Naive thymus-derived CD4-positive, alpha-beta T cell (primary cell): ENCODE measurements at regions of chr5 and their contacts with region 1.

Region 1: DNA sequence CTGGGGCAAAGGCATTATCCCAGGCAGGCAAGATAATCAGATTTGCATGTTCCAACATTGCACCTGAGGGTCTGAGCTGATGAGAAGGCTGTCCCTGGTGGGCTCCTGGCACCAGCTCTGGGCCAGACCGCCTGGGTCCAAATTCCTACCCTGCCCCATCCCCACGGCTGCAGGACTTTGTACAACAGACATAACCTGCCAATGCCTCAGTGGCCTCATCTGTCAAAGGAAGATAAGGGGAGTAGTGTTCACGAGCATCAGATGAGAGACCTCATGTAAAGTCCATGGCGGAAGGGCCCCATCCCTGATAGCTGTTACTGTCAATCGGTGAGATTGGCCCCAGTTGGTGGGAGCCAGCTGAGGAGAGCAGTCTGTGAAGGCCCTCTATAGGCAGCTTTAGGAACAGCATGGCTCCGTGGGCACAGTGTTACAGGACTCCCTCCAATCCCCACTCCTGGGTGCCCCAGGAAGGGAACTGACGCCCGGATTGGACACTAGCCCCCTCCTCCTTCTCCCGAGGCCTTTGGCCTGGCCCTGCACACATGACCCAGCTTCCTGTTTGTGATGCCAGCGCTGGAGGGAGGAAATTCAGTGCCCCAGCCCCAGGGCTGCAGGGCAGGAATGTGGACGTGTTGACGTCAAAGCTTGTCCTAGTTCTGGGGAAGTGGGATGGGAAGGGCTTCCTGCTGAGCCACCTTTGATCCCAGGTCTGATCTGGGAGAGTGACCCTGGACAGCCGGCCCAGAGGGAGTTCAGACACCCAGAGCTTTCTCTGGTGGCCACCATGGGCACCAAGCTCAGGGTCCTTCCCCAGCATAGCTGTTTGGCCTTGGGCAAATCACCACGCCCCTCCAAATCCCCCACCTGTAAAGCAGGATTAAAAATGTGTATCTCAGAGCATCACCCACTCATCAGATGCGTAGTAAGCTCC is 56.2 kb downstream of the DUSP1 start:
- DNase-seq: peak; percentile 38 to 65 (median 57)
- ATAC-seq: peak; percentile 85
- H3K4me3 ChIP-seq: no peak overlapping the region
- H3K4me3 Mint-ChIP-seq: no peak overlapping the region
- H3K27ac ChIP-seq: no peak overlapping the region
- H3K27ac Mint-ChIP-seq: peak overlapping the region in 4 of 9 donors; percentile 17 to 72 (median 38)
- H3K4me1 ChIP-seq: peaks cover 0 to 7% of the 10 kb centered on the region in 2 donors
- H3K4me1 Mint-ChIP-seq: peaks cover 0 to 8% (median 5%) of the 10 kb centered on the region in 7 donors
- H3K27me3 ChIP-seq: no peaks in the 10 kb centered on the region
- H3K27me3 Mint-ChIP-seq: peaks cover 0 to 18% (median 11%) of the 10 kb centered on the region in 5 donors

Region 2: GRCh38 chr5:172777881-172778814 is 63.4 kb after region 1 on chr5:
- CTCF ChIA-PET with region 1: interaction called, 33 read pairs
- POLR2A ChIA-PET with region 1: interaction called, 7 read pairs
- intact Hi-C with region 1: loop called in 1 of 2 experiments (anchors 1 kb)
- DNase-seq: no peak
- ATAC-seq: peak; percentile 26
- H3K4me3 ChIP-seq: peak overlapping the region; percentile 10
- H3K4me3 Mint-ChIP-seq: peak overlapping the region in 9 of 10 donors; percentile 60 to 81 (median 64)
- H3K27ac ChIP-seq: peak overlapping the region; percentile 89
- H3K27ac Mint-ChIP-seq: peak overlapping the region; percentile 91 to 98 (median 93)
- H3K4me1 ChIP-seq: peaks cover 23 to 27% of the 10 kb centered on the region in 2 donors
- H3K4me1 Mint-ChIP-seq: peaks cover 18 to 46% (median 40%) of the 10 kb centered on the region in 7 donors
- H3K27me3 ChIP-seq: no peaks in the 10 kb centered on the region
- H3K27me3 Mint-ChIP-seq: peaks cover 0 to 3% (median 0%) of the 10 kb centered on the region in 5 donors

Region 3: GRCh38 chr5:172849606-172850453 is 135.1 kb after region 1 on chr5:
- CTCF ChIA-PET with region 1: interaction called, 3 read pairs
- POLR2A ChIA-PET with region 1: no interaction called
- intact Hi-C with region 1: loop called in 1 of 2 experiments (anchors 5 kb)
- DNase-seq: no peak
- ATAC-seq: peak; percentile 38
- H3K4me3 ChIP-seq: no peak overlapping the region
- H3K4me3 Mint-ChIP-seq: peak overlapping the region in 1 of 10 donors; percentile 3
- H3K27ac ChIP-seq: no peak overlapping the region
- H3K27ac Mint-ChIP-seq: peak overlapping the region in 6 of 9 donors; percentile 33 to 71 (median 56)
- H3K4me1 ChIP-seq: peaks cover 11 to 17% of the 10 kb centered on the region in 2 donors
- H3K4me1 Mint-ChIP-seq: peaks cover 22 to 80% (median 71%) of the 10 kb centered on the region in 7 donors
- H3K27me3 ChIP-seq: no peaks in the 10 kb centered on the region
- H3K27me3 Mint-ChIP-seq: no peaks in the 10 kb centered on the region

Region 4: GRCh38 chr5:172932313-172933017 is 217.7 kb after region 1 on chr5:
- CTCF ChIA-PET with region 1: interaction called, 178 read pairs
- POLR2A ChIA-PET with region 1: interaction called, 11 read pairs
- intact Hi-C with region 1: loop called (anchors 1 kb)
- DNase-seq: peak; percentile 53 to 79 (median 68)
- ATAC-seq: peak; percentile 98
- H3K4me3 ChIP-seq: no peak overlapping the region
- H3K4me3 Mint-ChIP-seq: no peak overlapping the region
- H3K27ac ChIP-seq: no peak overlapping the region
- H3K27ac Mint-ChIP-seq: peak overlapping the region in 8 of 9 donors; percentile 25 to 82 (median 52)
- H3K4me1 ChIP-seq: no peaks in the 10 kb centered on the region
- H3K4me1 Mint-ChIP-seq: peaks cover 0 to 13% (median 6%) of the 10 kb centered on the region in 7 donors
- H3K27me3 ChIP-seq: no peaks in the 10 kb centered on the region
- H3K27me3 Mint-ChIP-seq: no peaks in the 10 kb centered on the region

Region 5: DNA sequence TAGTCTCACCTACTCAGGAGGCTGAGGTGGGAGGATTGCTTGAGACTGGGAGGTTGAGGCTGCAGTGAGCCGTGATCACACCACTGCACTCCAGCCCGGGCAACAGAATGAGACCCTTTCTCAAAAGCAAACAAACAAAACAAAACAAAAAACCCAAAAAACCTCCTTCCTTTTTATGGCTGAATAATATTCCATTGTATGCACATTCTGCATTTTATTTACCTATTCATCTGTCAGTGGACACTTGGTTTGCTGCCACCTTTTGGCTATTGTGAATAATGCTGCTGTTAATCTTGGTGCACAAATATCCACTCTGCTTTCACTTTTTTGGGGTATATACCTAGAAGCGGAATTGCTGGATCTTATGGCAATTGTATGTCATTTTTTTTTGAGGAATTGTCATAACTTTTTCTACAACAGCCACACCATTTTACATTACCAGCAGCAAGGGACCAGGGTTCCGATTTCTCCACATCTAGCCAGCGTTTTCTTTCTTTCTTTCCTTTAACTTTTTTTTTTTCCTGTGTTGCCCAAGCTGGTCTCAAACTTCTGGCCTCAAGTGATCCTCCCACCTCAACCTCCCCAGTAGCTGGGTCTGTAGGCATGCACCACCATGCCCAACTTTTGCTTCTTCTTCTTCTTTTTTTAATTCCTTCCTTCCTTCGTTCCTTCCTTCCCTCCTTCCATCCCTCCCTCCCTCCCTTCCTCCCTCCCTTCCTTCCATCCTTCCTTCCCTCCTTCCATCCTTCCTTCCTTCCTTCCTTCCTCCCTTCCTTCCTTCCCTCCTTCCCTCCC is 489.6 kb after region 1 on chr5:
- CTCF ChIA-PET with region 1: no interaction called
- POLR2A ChIA-PET with region 1: no interaction called
- intact Hi-C with region 1: loop called in 1 of 2 experiments (anchors 5 kb)
- DNase-seq: peak in 5 of 9 donors; percentile 12 to 44 (median 23)
- ATAC-seq: peak; percentile 44
- H3K4me3 ChIP-seq: no peak overlapping the region
- H3K4me3 Mint-ChIP-seq: no peak overlapping the region
- H3K27ac ChIP-seq: no peak overlapping the region
- H3K27ac Mint-ChIP-seq: peak overlapping the region in 1 of 9 donors; percentile 2
- H3K4me1 ChIP-seq: no peaks in the 10 kb centered on the region
- H3K4me1 Mint-ChIP-seq: peaks cover 0 to 4% (median 0%) of the 10 kb centered on the region in 7 donors
- H3K27me3 ChIP-seq: peaks cover 0 to 4% of the 10 kb centered on the region in 2 donors
- H3K27me3 Mint-ChIP-seq: peaks cover 23 to 70% (median 50%) of the 10 kb centered on the region in 5 donors

Region 6: GRCh38 chr5:173331956-173332479 is 617.3 kb after region 1 on chr5:
- CTCF ChIA-PET with region 1: no interaction called
- POLR2A ChIA-PET with region 1: no interaction called
- intact Hi-C with region 1: loop called (anchors 2 to 5 kb)
- DNase-seq: peak; percentile 29 to 92 (median 59)
- ATAC-seq: peak; percentile 96
- H3K4me3 ChIP-seq: no peak overlapping the region
- H3K4me3 Mint-ChIP-seq: peak overlapping the region in 2 of 10 donors; percentile 10 to 48
- H3K27ac ChIP-seq: no peak overlapping the region
- H3K27ac Mint-ChIP-seq: peak overlapping the region in 1 of 9 donors; percentile 62
- H3K4me1 ChIP-seq: no peaks in the 10 kb centered on the region
- H3K4me1 Mint-ChIP-seq: peaks cover 10 to 33% (median 17%) of the 10 kb centered on the region in 7 donors
- H3K27me3 ChIP-seq: peaks cover 0 to 3% of the 10 kb centered on the region in 2 donors
- H3K27me3 Mint-ChIP-seq: peaks cover 7 to 71% (median 68%) of the 10 kb centered on the region in 5 donors